MCF 10A (cell line): ENCODE measurements at regions of chr9 and their contacts with region 1.

Region 1: GRCh38 chr9:95875305-95876137 is at the start of gene ERCC6L2:
- DNase-seq: peak; percentile 98
- H3K4me3 Mint-ChIP-seq: no peak within 1 kb of the TSS
- H3K27ac Mint-ChIP-seq: no peak within 1 kb of the TSS
- H3K4me1 Mint-ChIP-seq: peaks cover 6% of the 10 kb centered on the region
- H3K27me3 Mint-ChIP-seq: no peaks in the 10 kb centered on the region
- CTCF ChIP-seq: no peak
- total RNA-seq, gene ERCC6L2: 26.9 and 28.0 TPM in 2 replicates

Region 2: DNA sequence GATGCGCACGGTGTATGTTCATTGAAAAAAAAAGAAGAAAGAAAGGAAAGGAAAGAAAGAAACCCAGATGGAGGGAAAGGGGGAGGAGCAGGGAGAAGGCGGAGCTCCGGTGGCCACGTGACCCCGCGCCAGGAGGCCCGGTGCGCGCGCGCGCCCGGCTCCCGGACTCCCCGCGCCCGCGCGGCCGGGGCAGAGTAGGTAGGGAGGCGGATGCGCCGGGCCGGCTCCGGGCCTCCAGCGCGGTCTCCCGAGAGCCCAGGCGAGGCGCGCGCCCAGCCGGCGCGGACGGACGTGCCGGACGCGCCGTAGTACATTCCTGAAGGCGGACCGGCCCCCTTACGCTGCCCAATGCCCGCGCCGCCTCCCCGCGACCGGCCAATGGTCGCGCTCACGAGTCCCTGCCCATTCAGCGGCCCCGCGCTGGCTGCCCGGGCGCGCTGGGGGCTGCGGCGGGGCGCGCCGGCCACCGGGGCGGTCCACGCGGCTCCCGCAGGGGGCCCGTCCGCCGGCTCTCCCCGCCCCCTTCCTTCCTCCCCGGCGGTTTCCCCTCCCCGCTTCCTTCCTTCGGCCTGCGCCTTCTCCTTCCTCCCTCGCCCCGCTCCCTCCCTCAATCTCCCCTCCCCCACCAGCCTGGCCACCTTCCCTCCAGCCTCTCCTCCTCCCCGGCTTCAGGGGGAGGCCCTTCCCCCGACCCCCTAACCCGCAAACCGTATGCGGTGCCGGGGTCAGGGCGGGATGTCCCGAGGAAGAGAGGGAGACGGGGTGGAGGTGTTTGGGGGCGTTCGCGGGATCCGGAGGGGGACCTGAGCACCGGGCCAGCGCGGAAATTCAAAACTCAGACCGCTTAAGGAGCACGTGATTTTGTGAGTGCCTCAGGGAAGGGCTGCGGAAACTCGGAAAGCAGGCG is 364.6 kb before region 1 on chr9:
- CTCF ChIA-PET with region 1: no interaction called
- POLR2A ChIA-PET with region 1: interaction called, 82 read pairs
- intact Hi-C with region 1: loop called (anchors 5 kb)
- DNase-seq: peak; percentile 90
- H3K4me3 Mint-ChIP-seq: peak overlapping the region; percentile 79
- H3K27ac Mint-ChIP-seq: peak overlapping the region; percentile 91
- H3K4me1 Mint-ChIP-seq: peaks cover 7% of the 10 kb centered on the region
- H3K27me3 Mint-ChIP-seq: no peaks in the 10 kb centered on the region
- CTCF ChIP-seq: no peak

Region 3: GRCh38 chr9:95756986-95757385 is 118.5 kb before region 1 on chr9:
- CTCF ChIA-PET with region 1: no interaction called
- POLR2A ChIA-PET with region 1: interaction called, 11 read pairs
- intact Hi-C with region 1: no loop called
- DNase-seq: peak; percentile 92
- H3K4me3 Mint-ChIP-seq: no peak overlapping the region
- H3K27ac Mint-ChIP-seq: peak overlapping the region; percentile 22
- H3K4me1 Mint-ChIP-seq: peaks cover 11% of the 10 kb centered on the region
- H3K27me3 Mint-ChIP-seq: no peaks in the 10 kb centered on the region
- CTCF ChIP-seq: no peak

Region 4: DNA sequence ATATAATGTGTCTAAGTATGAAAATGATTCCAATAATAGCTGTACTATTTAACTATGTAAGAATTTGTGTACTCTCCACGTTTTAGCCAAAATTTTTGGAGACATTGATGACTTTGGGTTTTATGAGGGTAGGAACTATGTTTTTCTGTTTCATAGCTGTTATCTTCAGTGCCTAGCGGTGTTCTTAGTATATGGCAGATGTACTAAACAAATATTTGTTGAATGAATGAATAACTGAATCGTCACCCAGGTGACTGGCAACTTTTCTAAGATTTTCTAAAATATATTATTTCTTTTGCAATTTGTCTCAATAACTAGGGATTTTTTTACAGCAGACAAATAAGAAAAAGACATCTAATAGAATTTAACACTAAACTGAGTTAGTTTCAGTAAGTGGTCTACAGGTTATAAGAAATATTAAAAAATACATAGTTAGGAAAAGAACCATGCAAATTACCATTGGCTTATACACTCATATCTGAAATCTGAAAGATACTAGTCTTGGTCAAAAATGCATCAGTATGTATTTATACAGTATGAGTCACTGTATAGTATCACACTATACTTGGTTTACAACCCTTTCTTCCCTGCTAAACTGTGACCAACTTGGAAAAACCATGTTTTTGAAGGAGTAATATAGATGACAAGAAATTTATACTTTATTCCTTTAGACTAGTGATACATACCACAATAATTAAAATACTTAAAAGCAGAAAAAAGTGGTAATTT is 10.5 kb before region 1 on chr9:
- CTCF ChIA-PET with region 1: no interaction called
- POLR2A ChIA-PET with region 1: interaction called, 78 read pairs
- intact Hi-C with region 1: no loop called
- DNase-seq: no peak
- H3K4me3 Mint-ChIP-seq: no peak overlapping the region
- H3K27ac Mint-ChIP-seq: no peak overlapping the region
- H3K4me1 Mint-ChIP-seq: no peaks in the 10 kb centered on the region
- H3K27me3 Mint-ChIP-seq: no peaks in the 10 kb centered on the region
- CTCF ChIP-seq: no peak

Region 5: GRCh38 chr9:95901506-95901905 is 26.0 kb after region 1 on chr9:
- CTCF ChIA-PET with region 1: interaction called, 3 read pairs
- POLR2A ChIA-PET with region 1: interaction called, 53 read pairs
- intact Hi-C with region 1: no loop called
- DNase-seq: peak; percentile 61
- H3K4me3 Mint-ChIP-seq: peak overlapping the region; percentile 17
- H3K27ac Mint-ChIP-seq: peak overlapping the region; percentile 51
- H3K4me1 Mint-ChIP-seq: peaks cover 8% of the 10 kb centered on the region
- H3K27me3 Mint-ChIP-seq: no peaks in the 10 kb centered on the region
- CTCF ChIP-seq: no peak